HAP-1 (cell line): ENCODE measurements at regions of chr5 and their contacts with region 1.

Region 1: DNA sequence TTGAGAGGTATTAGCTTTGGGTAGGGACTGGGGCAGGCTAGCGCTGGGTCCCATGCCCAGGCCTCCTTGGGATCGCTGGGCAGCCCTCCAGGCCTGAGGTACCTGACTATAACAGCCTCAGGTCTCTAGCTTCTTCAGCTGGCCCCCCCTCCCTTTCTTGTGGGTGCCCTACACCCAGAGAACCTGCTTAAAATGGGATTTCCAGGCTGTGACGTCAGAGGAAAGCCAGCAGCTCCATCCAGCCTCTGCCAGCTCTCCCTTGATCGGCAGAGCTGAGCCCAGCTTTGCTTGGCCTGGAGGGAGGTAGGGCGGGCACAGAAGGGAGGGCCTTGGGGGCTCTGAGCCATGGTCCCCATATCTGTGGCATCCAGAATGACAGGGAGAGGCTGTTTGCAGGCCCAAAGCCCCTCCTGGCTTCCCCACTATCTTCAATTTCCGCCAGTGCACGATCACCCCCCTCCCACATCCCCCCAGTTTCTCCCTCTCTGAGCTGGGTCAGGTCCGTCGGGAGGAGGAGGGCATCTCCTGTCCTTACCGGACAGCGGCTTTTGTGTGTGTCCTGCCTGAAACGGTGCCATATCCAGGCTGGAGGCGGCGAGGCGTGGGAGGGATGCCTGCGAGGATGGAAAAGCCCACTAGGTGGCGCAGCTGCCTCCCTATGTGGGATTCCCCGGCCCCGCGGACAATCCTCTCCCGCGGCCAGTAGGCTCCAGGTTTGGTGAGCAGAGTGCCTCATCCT is 10.8 kb downstream of the REEP2 start:
- DNase-seq: peak; percentile 81 to 95
- H3K4me3 ChIP-seq: no peak overlapping the region
- H3K4me1 ChIP-seq: peaks cover 8% of the 10 kb centered on the region
- H3K27me3 ChIP-seq: no peaks in the 10 kb centered on the region

Region 2: DNA sequence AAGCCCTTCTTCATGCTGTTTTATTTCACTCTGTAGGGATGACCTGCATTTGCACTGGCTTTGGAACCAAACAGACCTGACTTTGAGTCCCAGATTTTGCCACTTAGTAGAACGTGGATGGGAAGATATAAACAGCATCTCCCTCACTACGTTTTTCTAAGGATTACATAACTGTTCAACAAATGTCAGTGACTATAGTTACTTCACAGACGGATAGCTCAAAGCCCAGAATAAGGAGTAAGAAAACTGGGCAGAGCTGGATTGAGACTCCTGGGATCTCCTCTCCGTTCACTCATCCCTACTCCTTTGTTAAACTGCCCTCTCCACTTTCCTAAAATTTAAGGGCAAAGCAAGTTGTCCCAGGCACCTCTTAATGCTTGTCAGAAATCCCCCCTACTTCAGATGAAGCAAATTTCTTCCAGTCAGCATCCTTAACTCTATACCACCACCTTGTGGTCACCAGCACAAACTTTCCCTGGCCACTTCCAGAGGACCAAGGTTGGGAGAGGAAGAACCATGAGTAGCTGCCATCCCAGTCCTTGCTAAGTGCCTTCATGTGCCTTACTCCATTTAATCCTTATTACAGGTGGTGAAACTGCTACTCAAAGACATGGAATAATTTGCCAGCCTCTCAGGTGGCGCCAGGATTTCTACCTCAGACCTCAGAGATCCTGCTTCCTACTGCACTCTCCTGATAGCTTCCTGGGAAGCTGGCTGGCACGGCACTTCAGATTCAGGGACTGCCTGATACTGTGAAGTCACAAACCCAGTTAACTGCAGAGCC is 54.0 kb after region 1 on chr5:
- in situ Hi-C with region 1: loop called (anchors 5 kb)
- DNase-seq: peak; percentile 53 to 73
- H3K4me3 ChIP-seq: no peak overlapping the region
- H3K4me1 ChIP-seq: no peaks in the 10 kb centered on the region
- H3K27me3 ChIP-seq: no peaks in the 10 kb centered on the region

Region 3: DNA sequence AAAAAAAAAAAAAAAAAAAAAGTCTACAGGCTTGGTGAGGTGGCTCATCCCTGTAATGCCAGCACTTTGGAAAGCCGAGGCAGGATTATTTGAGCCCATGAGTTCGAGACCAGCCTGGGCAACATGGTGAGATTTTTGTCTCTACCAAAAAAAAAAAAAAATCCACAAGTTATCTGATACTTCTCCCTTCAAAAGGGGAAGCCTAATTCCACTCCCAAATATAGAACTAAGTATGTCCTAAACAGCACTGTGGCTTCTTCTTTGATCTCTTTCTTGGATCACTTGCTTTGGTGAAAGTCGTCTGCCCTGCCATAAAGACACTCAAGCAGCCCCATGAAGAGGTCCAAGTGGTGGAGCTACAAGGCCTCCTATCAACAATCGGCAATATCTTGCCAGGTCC is 1051.7 kb after region 1 on chr5:
- in situ Hi-C with region 1: no loop called
- DNase-seq: no peak
- H3K4me3 ChIP-seq: no peak overlapping the region
- H3K4me1 ChIP-seq: no peaks in the 10 kb centered on the region
- H3K27me3 ChIP-seq: no peaks in the 10 kb centered on the region